Activated naive CD8-positive, alpha-beta T cell treated with anti-CD3 and anti-CD28 coated beads, Interleukin-2, amount 10 ng/mL, durations not matched to agents 7 days and 5 days (primary cell): ENCODE measurements at regions of chr2 and their contacts with region 1.

Region 1: GRCh38 chr2:11154923-11155380 is 315 bp upstream of the SLC66A3 start:
- DNase-seq: peak; percentile 96
- ATAC-seq: peak; percentile 94
- H3K4me3 Mint-ChIP-seq: peak overlapping the region; percentile 83
- H3K27ac Mint-ChIP-seq: peak overlapping the region; percentile 89
- H3K4me1 Mint-ChIP-seq: peaks cover 9% of the 10 kb centered on the region
- H3K27me3 Mint-ChIP-seq: peaks cover 6% of the 10 kb centered on the region

Region 2: GRCh38 chr2:11257078-11257477 is 102.1 kb after region 1 on chr2:
- POLR2A ChIA-PET with region 1: no interaction called
- DNase-seq: no peak
- ATAC-seq: no peak
- H3K4me3 Mint-ChIP-seq: no peak overlapping the region
- H3K27ac Mint-ChIP-seq: no peak overlapping the region
- H3K4me1 Mint-ChIP-seq: no peaks in the 10 kb centered on the region
- H3K27me3 Mint-ChIP-seq: no peaks in the 10 kb centered on the region

Region 3: DNA sequence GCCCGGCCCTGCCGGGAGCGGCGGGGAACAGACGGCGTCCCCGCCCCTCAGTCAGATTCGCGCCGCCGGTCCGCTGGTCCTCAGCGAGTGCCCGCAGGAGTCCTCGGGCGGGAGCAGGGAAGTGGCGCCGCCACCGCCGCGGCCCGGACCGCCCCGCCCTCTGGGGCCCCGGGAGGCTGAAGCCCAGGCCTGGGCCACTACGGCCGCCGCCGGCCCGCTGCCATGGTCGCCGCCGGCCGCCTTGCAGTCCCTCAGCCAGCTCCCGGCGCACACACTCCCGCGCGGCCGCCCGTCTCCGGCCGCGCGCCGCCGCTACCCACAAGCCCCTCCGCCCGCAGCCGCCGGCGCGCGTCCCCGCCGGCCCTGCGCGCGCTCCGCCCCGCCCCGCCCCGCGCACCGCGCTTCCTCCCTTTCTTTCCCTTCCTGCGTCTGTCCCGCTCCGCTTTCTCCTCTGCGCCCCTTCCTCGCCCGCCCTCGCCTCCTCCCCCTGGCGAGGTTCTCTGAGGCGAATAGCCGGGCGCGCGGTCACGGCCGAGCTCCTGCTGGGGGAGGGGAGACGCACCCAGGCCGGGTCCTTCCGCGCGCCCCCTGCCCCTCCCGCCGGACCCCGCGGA is 189.5 kb after region 1 on chr2 and contains the start of gene ROCK2:
- POLR2A ChIA-PET with region 1: interaction called, 17 read pairs
- DNase-seq: peak; percentile 78
- ATAC-seq: peak; percentile 59
- H3K4me3 Mint-ChIP-seq: peak within 1 kb of the TSS; percentile 99
- H3K27ac Mint-ChIP-seq: peak within 1 kb of the TSS; percentile 93
- H3K4me1 Mint-ChIP-seq: peaks cover 25% of the 10 kb centered on the region
- H3K27me3 Mint-ChIP-seq: peaks cover 31% of the 10 kb centered on the region
- total RNA-seq, gene ROCK2: 14.6 to 15.3 TPM